Activated T-helper 2 cell treated with anti-CD3 and anti-CD28 coated beads, Interferon-gamma antibody, Interleukin-2, Interleukin-4, amounts not matched to agents 10 μg/mL and 5 μg/mL and 100 μg/mL, durations not matched to agents 14 hours and 24 hours and 36 hours (primary cell): ENCODE measurements at regions of chr5 and their contacts with region 1.

Region 1: GRCh38 chr5:133930061-133930812 is 38.2 kb downstream of the C5orf15 start:
- DNase-seq: peak; percentile 39
- H3K4me3 Mint-ChIP-seq: peak overlapping the region; percentile 54
- H3K27ac Mint-ChIP-seq: peak overlapping the region; percentile 97
- H3K4me1 Mint-ChIP-seq: peaks cover 55% of the 10 kb centered on the region
- H3K27me3 Mint-ChIP-seq: no peaks in the 10 kb centered on the region

Region 2: GRCh38 chr5:133801955-133802751 is 128.1 kb before region 1 on chr5:
- intact Hi-C with region 1: no loop called
- DNase-seq: no peak
- H3K4me3 Mint-ChIP-seq: no peak overlapping the region
- H3K27ac Mint-ChIP-seq: no peak overlapping the region
- H3K4me1 Mint-ChIP-seq: no peaks in the 10 kb centered on the region
- H3K27me3 Mint-ChIP-seq: peaks cover 13% of the 10 kb centered on the region

Region 3: GRCh38 chr5:133890322-133890721 is 39.9 kb before region 1 on chr5:
- intact Hi-C with region 1: loop called (anchors 5 kb)
- DNase-seq: no peak
- H3K4me3 Mint-ChIP-seq: no peak overlapping the region
- H3K27ac Mint-ChIP-seq: no peak overlapping the region
- H3K4me1 Mint-ChIP-seq: peaks cover 7% of the 10 kb centered on the region
- H3K27me3 Mint-ChIP-seq: peaks cover 1% of the 10 kb centered on the region